Endothelial cell of umbilical vein (primary cell): ENCODE measurements at regions of chr7 and their contacts with region 1.

Region 1: DNA sequence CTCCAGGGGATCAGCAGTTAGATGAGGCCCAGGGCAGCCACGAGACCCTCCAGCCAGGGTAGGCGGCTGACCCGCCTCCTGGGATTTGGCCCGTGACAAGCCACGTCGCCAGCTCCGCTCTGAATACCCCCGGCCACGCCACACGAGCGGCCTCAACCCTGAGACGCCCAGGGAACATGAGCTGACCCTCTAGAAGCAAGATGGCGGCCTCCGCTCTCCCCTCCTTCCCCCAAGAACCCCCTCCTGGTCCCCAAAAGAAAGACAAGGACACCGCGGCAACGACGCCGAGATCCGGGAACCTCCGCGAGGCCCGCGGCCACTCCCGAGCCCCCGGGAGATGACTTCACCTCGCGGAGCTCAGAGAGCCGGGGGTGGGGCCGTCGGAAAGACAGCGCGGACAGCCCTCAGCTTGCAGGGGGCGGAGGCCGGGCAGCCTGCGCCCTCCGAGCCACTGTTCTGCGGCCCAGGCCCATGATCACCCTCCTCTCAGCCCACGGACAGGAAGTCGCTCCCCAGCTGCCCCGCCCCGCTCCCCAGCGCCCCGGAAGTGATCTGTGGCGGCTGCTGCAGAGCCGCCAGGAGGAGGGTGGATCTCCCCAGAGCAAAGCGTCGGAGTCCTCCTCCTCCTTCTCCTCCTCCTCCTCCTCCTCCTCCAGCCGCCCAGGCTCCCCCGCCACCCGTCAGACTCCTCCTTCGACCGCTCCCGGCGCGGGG is at the start of gene RALA:
- DNase-seq: peak; percentile 87
- H3K4me3 ChIP-seq: peak within 1 kb of the TSS; percentile 80 to 98 (median 90)
- H3K27ac ChIP-seq: peak within 1 kb of the TSS; percentile 87
- H3K4me1 ChIP-seq: peaks cover 32% of the 10 kb centered on the region
- H3K27me3 ChIP-seq: no peaks in the 10 kb centered on the region
- CTCF ChIP-seq: no peak
- POLR2A ChIP-seq: peak; percentile 75
- total RNA-seq, gene RALA: 181 and 191 TPM in 2 replicates

Region 2: DNA sequence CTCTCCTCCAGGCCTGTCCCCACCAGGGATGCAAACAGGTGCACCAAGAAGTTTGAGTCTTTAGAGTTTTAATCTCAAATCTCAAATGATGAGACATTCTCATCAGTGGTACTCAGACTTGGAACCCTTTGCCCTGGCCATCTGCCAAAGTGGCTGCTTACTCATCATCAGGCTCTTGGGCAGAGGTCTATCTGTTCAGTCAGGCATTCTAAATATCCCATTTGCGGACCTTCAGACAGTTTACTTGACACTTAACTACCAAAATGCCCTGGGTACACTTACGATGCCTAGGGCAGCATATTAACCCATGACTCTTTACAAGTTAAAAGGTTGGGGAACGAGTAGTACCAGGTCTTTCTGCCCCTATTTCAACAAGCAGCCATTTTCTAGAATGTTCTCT is 118.2 kb before region 1 on chr7:
- CTCF ChIA-PET with region 1: no interaction called
- POLR2A ChIA-PET with region 1: no interaction called
- dilution Hi-C with region 1: no loop called
- intact Hi-C with region 1: no loop called
- DNase-seq: no peak
- H3K4me3 ChIP-seq: no peak overlapping the region
- H3K27ac ChIP-seq: no peak overlapping the region
- H3K4me1 ChIP-seq: no peaks in the 10 kb centered on the region
- H3K27me3 ChIP-seq: no peaks in the 10 kb centered on the region
- CTCF ChIP-seq: no peak
- POLR2A ChIP-seq: no peak

Region 3: DNA sequence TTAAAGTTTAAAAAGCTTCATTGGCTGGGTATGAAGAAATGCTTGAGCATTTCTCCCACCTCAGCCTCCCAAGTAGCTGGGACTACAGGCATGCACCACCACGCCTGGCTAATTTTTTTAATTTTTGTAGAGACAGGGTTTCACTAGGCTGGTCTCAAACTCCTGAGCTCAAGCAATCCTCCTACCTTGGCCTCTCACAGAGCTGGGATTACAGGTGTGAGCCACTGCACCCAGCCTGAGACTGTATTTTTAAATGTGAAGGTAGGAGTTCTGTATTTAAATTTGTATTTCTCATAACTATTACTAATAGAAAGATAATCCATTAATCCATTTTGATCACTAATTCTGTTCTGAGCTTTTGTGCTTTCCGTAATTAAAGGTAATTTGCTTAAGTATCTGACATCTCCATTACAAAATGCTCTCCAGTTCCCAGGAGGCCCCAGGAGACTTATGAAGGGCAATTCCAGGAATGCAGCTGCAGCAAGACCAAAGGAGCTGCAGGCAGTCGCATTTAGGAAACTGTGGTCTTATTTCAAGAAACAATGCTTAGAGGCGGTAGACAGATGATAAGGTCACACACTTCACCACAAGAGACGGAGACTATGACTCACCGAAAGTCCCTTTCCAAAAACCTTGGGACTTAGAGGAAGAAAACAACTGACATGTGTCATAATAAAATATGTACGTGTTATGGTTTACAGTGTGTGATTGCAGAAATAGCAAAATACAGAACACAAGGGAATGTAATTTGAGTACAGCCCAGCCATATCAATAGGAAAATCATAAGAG is 33.7 kb before region 1 on chr7:
- CTCF ChIA-PET with region 1: interaction called, 6 read pairs
- POLR2A ChIA-PET with region 1: interaction called, 7 read pairs
- dilution Hi-C with region 1: no loop called
- intact Hi-C with region 1: loop called (anchors 1 kb)
- DNase-seq: peak; percentile 99
- H3K4me3 ChIP-seq: no peak overlapping the region
- H3K27ac ChIP-seq: peak overlapping the region; percentile 98
- H3K4me1 ChIP-seq: peaks cover 70% of the 10 kb centered on the region
- H3K27me3 ChIP-seq: no peaks in the 10 kb centered on the region
- CTCF ChIP-seq: no peak
- POLR2A ChIP-seq: peak; percentile 38

Region 4: GRCh38 chr7:39609113-39609934 is 13.9 kb before region 1 on chr7:
- CTCF ChIA-PET with region 1: interaction called, 16 read pairs
- POLR2A ChIA-PET with region 1: interaction called, 15 read pairs
- dilution Hi-C with region 1: no loop called
- intact Hi-C with region 1: loop called (anchors 1 kb)
- DNase-seq: peak; percentile 89
- H3K4me3 ChIP-seq: peak overlapping the region in 2 of 3 experiments; percentile 16 to 25
- H3K27ac ChIP-seq: peak overlapping the region; percentile 99
- H3K4me1 ChIP-seq: peaks cover 75% of the 10 kb centered on the region
- H3K27me3 ChIP-seq: no peaks in the 10 kb centered on the region
- CTCF ChIP-seq: peak; percentile 30 to 42
- POLR2A ChIP-seq: peak; percentile 14

Region 5: DNA sequence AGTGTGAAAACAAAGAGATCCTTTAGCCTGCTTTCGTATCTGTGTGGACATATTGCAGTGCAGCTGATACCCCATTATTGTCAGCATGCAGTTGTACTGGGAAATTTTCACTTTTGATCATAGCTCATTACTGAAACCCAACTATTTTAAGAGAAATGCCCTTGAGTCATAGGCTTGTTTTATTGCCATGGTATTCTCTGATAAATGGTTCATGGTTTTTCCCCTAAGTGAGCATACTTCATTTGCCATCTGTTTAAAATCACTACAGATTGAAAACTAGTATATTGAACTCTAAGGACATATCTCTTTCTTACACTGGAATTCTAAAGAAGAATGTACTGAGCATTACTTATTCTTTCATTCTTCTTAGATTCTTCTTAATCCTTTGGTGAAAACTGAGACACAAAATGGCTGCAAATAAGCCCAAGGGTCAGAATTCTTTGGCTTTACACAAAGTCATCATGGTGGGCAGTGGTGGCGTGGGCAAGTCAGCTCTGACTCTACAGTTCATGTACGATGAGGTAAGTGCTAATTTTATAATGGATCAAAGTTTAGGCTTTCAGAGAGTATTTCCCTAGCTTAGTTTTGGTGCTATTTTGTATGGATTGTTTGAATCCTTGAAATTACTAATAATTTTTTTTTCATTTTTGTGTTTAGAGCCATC is 63.2 kb after region 1 on chr7:
- CTCF ChIA-PET with region 1: no interaction called
- POLR2A ChIA-PET with region 1: no interaction called
- dilution Hi-C with region 1: no loop called
- intact Hi-C with region 1: loop called (anchors 2 kb)
- DNase-seq: no peak
- H3K4me3 ChIP-seq: no peak overlapping the region
- H3K27ac ChIP-seq: no peak overlapping the region
- H3K4me1 ChIP-seq: peaks cover 64% of the 10 kb centered on the region
- H3K27me3 ChIP-seq: no peaks in the 10 kb centered on the region
- CTCF ChIP-seq: no peak
- POLR2A ChIP-seq: no peak

Region 6: GRCh38 chr7:39732837-39733804 is 109.9 kb after region 1 on chr7:
- CTCF ChIA-PET with region 1: no interaction called
- POLR2A ChIA-PET with region 1: no interaction called
- dilution Hi-C with region 1: no loop called
- intact Hi-C with region 1: loop called (anchors 2 kb)
- DNase-seq: peak; percentile 93
- H3K4me3 ChIP-seq: peak overlapping the region; percentile 31 to 46 (median 42)
- H3K27ac ChIP-seq: peak overlapping the region; percentile 84
- H3K4me1 ChIP-seq: peaks cover 23% of the 10 kb centered on the region
- H3K27me3 ChIP-seq: no peaks in the 10 kb centered on the region
- CTCF ChIP-seq: no peak
- POLR2A ChIP-seq: peak; percentile 34

Region 7: DNA sequence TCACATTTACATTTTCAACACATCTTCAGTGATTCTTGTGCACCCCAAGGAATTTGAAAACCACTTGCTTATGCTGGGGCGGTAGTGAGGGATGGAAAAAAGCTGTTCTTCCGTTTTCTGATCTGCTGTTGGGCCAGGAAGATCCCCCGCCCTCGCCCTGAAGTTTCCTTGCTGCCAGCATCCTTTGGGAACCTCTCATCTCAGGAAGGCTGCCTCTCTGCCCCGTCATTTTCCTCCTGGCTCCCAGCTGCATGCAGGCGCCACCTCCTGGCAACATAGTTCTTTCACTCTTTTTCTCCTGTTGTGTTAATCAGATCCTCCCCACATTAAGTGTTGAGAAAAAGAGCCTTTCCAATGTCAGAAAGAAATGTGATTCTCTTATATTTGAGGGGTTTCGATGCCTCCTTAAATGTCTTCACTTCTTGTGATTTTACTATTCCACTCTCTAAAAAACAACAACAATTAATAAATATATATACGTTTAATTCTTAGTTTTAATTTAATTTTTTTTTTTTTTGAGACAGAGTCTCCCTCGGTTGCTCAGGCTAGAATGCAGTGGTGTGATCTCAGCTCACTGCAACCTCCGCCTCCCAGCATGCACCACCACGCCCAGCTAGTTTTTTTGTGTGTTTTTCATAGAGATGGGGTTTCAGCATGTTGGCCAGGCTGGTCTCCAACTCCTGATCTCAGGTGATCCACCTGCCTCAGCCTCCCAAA is 123.1 kb after region 1 on chr7:
- CTCF ChIA-PET with region 1: interaction called, 11 read pairs
- POLR2A ChIA-PET with region 1: no interaction called
- dilution Hi-C with region 1: no loop called
- intact Hi-C with region 1: loop called (anchors 1 kb)
- DNase-seq: peak; percentile 82
- H3K4me3 ChIP-seq: no peak overlapping the region
- H3K27ac ChIP-seq: no peak overlapping the region
- H3K4me1 ChIP-seq: peaks cover 6% of the 10 kb centered on the region
- H3K27me3 ChIP-seq: no peaks in the 10 kb centered on the region
- CTCF ChIP-seq: peak; percentile 75 to 77
- POLR2A ChIP-seq: no peak

Region 8: GRCh38 chr7:39948956-39949928 is 326.1 kb after region 1 on chr7:
- CTCF ChIA-PET with region 1: no interaction called
- POLR2A ChIA-PET with region 1: no interaction called
- dilution Hi-C with region 1: no loop called
- intact Hi-C with region 1: loop called (anchors 5 kb)
- DNase-seq: peak; percentile 100
- H3K4me3 ChIP-seq: peak overlapping the region; percentile 0 to 76 (median 73)
- H3K27ac ChIP-seq: peak overlapping the region; percentile 81
- H3K4me1 ChIP-seq: peaks cover 19% of the 10 kb centered on the region
- H3K27me3 ChIP-seq: no peaks in the 10 kb centered on the region
- CTCF ChIP-seq: no peak
- POLR2A ChIP-seq: peak; percentile 95